ENCODE measurements at regions of chr7 and their contacts with region 1.

Region 1: DNA sequence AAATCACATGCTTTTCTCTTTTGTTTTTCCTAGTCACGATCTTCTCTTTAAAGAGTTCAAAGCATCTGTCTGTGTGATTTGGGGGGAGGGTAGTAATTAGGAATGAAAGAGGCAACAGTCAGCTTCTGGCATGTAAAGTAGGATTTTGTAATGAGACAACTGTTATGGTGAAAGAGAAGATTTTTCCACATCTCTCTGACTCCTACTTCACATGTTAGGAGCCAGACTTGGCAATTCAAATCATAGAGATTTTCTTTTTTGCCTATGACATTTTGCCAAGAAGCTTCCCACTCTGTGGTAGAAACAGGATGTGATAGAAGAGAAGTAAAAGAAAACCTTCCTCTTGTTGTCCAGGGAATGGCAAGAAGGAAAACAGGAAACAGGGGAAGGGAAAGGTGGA is 38.3 kb upstream of the KLHL7 start:
- DNase-seq: no peak
- H3K4me3 ChIP-seq: no peak overlapping the region
- H3K27ac ChIP-seq: no peak overlapping the region
- H3K4me1 ChIP-seq: no peaks in the 10 kb centered on the region
- H3K27me3 ChIP-seq: peaks cover 4% of the 10 kb centered on the region
- CTCF ChIP-seq: no peak

Region 2: GRCh38 chr7:22726345-22727185 is 340.7 kb before region 1 on chr7:
- intact Hi-C with region 1: loop called (anchors 5 kb)
- DNase-seq: no peak
- H3K4me3 ChIP-seq: no peak overlapping the region
- H3K27ac ChIP-seq: peak overlapping the region; percentile 13
- H3K4me1 ChIP-seq: no peaks in the 10 kb centered on the region
- H3K27me3 ChIP-seq: peaks cover 5% of the 10 kb centered on the region
- CTCF ChIP-seq: peak; percentile 30